ENCODE measurements at regions of chr1 and their contacts with region 1.

Region 1: GRCh38 chr1:204072931-204073836 is at the start of gene SOX13:
- DNase-seq: peak; percentile 46 to 92
- H3K4me3 ChIP-seq: peak within 1 kb of the TSS; percentile 65 to 89
- H3K27ac ChIP-seq: peak within 1 kb of the TSS; percentile 74 to 78
- H3K4me1 ChIP-seq: peaks cover 0 to 14% of the 10 kb centered on the region in 2 donors
- H3K27me3 ChIP-seq: no peaks in the 10 kb centered on the region
- CTCF ChIP-seq: peak; percentile 2 to 32 (median 24)
- total RNA-seq, gene SOX13: 70.1 TPM

Region 2: DNA sequence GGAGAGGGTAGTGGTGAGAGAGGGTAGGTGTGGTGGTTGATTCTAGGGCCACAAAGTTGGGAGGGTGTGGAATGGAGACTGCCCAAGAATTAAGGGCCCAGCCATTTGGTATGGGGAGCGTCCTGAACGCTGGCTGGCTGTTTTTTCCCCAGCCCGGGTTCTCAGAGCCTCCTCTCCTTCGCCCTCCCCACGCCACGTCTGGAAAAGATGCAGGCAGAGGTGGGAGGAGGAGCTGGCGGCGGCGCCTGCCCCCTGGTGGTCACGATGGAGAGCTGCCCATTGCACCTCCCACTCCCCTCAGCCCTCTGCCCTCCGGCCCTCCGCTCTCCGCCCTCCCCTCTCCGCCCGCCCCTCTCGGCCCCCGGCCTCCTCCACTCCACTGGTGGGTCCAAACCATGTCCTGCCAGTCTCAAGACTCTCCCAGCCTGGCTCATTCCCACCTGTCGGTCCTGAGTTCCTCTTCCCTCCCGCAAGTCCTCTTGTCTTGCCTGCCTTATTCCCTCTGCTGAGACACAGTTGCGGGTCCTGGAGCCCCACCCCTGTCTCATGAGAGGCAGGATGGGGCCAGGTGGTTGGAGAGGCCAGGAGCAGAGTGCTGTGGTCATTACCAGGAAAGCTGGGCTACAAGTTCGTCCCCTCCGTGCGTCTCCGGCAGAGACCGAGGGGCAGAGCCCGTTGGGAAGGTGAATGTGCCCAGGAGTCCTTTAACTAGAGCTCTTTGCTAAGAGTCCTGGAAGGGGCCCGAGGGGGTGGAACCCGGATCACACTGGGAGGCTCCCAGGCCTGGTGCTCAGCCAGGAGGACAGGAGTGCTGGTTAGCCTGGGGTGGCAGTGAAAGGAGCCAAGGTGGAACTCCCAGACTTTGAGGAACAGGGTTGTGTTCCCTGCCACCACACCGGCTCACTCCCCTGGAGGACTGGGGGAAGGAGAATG is 56.0 kb after region 1 on chr1:
- intact Hi-C with region 1: loop called (anchors 1 kb)
- DNase-seq: peak in 1 of 2 donors; percentile 79
- H3K4me3 ChIP-seq: peak overlapping the region; percentile 46 to 49
- H3K27ac ChIP-seq: peak overlapping the region; percentile 25 to 58
- H3K4me1 ChIP-seq: peaks cover 0 to 23% of the 10 kb centered on the region in 2 donors
- H3K27me3 ChIP-seq: no peaks in the 10 kb centered on the region
- CTCF ChIP-seq: peak; percentile 91 to 92 (median 91)